ENCODE measurements at regions of chr3 and their contacts with region 1.

Region 1: DNA sequence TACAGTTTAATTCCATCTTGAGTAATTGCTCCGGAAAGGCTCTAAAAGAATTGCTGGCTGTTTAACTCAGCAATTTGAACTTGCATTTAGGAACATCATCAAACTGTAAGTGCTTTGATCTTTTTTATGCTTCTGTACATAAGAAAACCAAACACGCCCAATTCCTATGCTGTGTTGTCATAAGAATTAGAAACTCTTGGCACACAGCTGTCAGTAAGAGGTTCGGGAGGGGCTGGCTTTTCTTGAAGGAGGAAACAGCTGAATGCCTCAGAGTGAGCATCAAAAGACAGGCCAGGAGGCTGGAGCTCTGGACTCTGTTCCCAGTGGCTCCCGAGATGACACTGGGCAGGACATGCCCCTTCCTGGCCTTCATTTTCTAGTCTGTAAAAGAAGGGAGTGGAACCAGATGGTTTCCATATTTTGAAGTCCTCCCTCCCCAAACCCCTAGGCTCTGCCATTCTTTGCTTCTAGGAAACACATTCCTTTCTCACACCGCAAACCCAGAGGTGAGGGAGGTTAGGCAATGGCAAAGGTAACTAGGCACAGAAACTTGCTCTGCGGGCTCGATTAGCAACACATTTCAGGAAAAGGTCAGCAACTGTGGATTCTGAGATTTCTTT is 73.7 kb upstream of the DLG1 start:
- DNase-seq: peak; percentile 66
- ATAC-seq: no peak
- H3K4me3 ChIP-seq: peak overlapping the region in 1 of 3 experiments; percentile 6; a peak in 1 of 6 replicates
- H3K27ac ChIP-seq: peak overlapping the region; percentile 90
- H3K4me1 ChIP-seq: peaks cover 65% of the 10 kb centered on the region
- H3K27me3 ChIP-seq: no peaks in the 10 kb centered on the region
- CTCF ChIP-seq: no peak
- EP300 ChIP-seq: peak in 1 of 2 experiments; percentile 66; a peak in 2 of 4 replicates
- POLR2A ChIP-seq: no peak
- RAD21 ChIP-seq: no peak

Region 2: GRCh38 chr3:196966476-196967401 is 405.4 kb before region 1 on chr3:
- CTCF ChIA-PET with region 1: no interaction called
- POLR2A ChIA-PET with region 1: no interaction called
- in situ Hi-C with region 1: no loop called
- intact Hi-C with region 1: no loop called
- DNase-seq: no peak
- ATAC-seq: no peak
- H3K4me3 ChIP-seq: peak overlapping the region in 1 of 3 experiments; percentile 78; a peak in 2 of 6 replicates
- H3K27ac ChIP-seq: peak overlapping the region; percentile 63
- H3K4me1 ChIP-seq: peaks cover 85% of the 10 kb centered on the region
- H3K27me3 ChIP-seq: no peaks in the 10 kb centered on the region
- CTCF ChIP-seq: no peak
- EP300 ChIP-seq: no peak
- POLR2A ChIP-seq: no peak
- RAD21 ChIP-seq: no peak

Region 3: DNA sequence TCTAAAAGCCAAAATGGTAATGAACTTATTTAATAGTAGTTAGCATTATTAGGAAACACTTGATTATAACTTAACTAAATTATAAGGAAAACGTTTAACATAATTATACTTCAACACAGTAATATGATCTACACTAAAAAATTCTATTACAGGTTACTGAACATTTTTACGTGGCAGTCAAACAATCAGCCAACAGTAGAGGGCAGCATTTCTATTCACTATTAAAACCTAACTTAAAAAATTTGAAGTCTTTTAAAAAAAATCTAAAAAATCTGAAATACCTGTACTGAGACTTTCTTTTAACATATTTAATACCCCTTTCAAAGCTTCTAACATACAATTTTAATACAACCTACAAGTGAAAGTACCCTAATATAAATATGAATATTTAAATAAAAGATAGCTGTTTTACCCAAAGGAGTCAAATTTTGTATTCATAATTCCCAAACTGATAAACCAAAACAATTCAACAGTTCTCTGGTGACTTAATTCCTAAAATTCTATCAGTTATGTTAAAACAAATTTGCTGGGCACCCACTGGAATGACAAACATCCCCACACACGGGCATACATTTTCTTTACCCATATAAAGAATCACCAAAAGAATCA is 115.2 kb before region 1 on chr3:
- CTCF ChIA-PET with region 1: no interaction called
- POLR2A ChIA-PET with region 1: no interaction called
- in situ Hi-C with region 1: no loop called
- intact Hi-C with region 1: loop called (anchors 5 kb)
- DNase-seq: peak; percentile 41
- ATAC-seq: no peak
- H3K4me3 ChIP-seq: no peak overlapping the region
- H3K27ac ChIP-seq: no peak overlapping the region
- H3K4me1 ChIP-seq: peaks cover 35% of the 10 kb centered on the region
- H3K27me3 ChIP-seq: no peaks in the 10 kb centered on the region
- CTCF ChIP-seq: peak; percentile 46
- EP300 ChIP-seq: no peak
- POLR2A ChIP-seq: no peak
- RAD21 ChIP-seq: 0 out of 2 replicates have a peak, but pooled peaks have one; percentile 25

Region 4: GRCh38 chr3:197298341-197298857 is 73.8 kb before region 1 on chr3 and contains the start of gene DLG1:
- CTCF ChIA-PET with region 1: no interaction called
- POLR2A ChIA-PET with region 1: interaction called, 32 read pairs
- in situ Hi-C with region 1: no loop called
- intact Hi-C with region 1: no loop called
- DNase-seq: peak; percentile 88
- ATAC-seq: peak; percentile 78
- H3K4me3 ChIP-seq: peak within 1 kb of the TSS; percentile 91 to 95 (median 94)
- H3K27ac ChIP-seq: peak within 1 kb of the TSS; percentile 98
- H3K4me1 ChIP-seq: peaks cover 54% of the 10 kb centered on the region
- H3K27me3 ChIP-seq: no peaks in the 10 kb centered on the region; a peak in 1 of 5 replicates
- CTCF ChIP-seq: no peak
- EP300 ChIP-seq: no peak
- POLR2A ChIP-seq: peak; percentile 87 to 88
- RAD21 ChIP-seq: peak; percentile 49; the same call in 1 of the 2 replicates
- total RNA-seq, gene DLG1: 104 and 105 TPM in 2 replicates

Region 5: DNA sequence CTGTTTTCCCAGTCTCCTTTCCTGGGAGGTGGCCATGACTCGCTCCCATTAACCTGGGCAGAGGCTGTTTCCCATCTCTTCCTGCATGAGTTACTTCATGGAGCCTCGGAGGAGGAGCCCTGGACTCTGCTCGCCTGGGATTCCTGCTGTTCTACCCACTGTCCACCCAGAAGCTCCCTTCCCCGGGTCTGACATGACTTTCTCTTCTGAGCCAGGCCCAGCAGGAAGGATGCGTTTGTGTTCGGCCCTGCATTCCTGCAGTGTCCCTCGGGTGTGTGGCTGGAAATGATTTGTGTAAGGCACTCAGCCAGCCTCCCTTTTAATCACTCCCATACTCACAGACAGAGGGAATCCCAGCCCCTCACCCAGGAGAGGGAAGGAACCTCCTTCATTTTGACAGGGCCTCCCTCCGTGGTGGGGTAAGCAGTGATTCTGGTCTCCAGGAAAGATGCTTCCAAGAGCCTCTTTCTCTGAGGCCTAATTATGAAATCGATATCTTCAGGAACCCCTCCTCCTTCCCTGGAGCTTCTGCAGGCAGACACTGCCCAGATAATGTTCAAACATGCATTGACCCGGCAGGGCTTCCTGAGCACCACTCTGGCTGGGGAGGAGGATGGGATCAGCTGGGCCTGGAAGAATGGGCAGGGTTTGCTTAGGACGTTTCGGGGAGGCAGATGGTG is 32.2 kb before region 1 on chr3:
- CTCF ChIA-PET with region 1: no interaction called
- POLR2A ChIA-PET with region 1: interaction called, 11 read pairs
- in situ Hi-C with region 1: no loop called
- intact Hi-C with region 1: no loop called
- DNase-seq: peak; percentile 43
- ATAC-seq: peak; percentile 91
- H3K4me3 ChIP-seq: peak overlapping the region; percentile 22 to 52 (median 29); a peak in 5 of 6 replicates
- H3K27ac ChIP-seq: no peak overlapping the region
- H3K4me1 ChIP-seq: peaks cover 34% of the 10 kb centered on the region
- H3K27me3 ChIP-seq: no peaks in the 10 kb centered on the region
- CTCF ChIP-seq: no peak
- EP300 ChIP-seq: no peak
- POLR2A ChIP-seq: peak in 1 of 2 experiments; percentile 46; a peak in 1 of 4 replicates
- RAD21 ChIP-seq: no peak

Region 6: GRCh38 chr3:197420115-197420514 is 48.0 kb after region 1 on chr3:
- CTCF ChIA-PET with region 1: no interaction called
- POLR2A ChIA-PET with region 1: interaction called, 3 read pairs
- in situ Hi-C with region 1: no loop called
- intact Hi-C with region 1: loop called (anchors 5 kb)
- DNase-seq: no peak
- ATAC-seq: no peak
- H3K4me3 ChIP-seq: no peak overlapping the region
- H3K27ac ChIP-seq: no peak overlapping the region
- H3K4me1 ChIP-seq: peaks cover 30% of the 10 kb centered on the region
- H3K27me3 ChIP-seq: no peaks in the 10 kb centered on the region
- CTCF ChIP-seq: no peak
- EP300 ChIP-seq: no peak
- POLR2A ChIP-seq: no peak
- RAD21 ChIP-seq: no peak

Region 7: GRCh38 chr3:197466586-197467399 is 94.6 kb after region 1 on chr3:
- CTCF ChIA-PET with region 1: no interaction called
- POLR2A ChIA-PET with region 1: interaction called, 20 read pairs
- in situ Hi-C with region 1: no loop called
- intact Hi-C with region 1: no loop called
- DNase-seq: no peak
- ATAC-seq: 0 out of 3 replicates have a peak, but pooled peaks have one; percentile 1
- H3K4me3 ChIP-seq: peak overlapping the region; percentile 28 to 56 (median 36); a peak in 5 of 6 replicates
- H3K27ac ChIP-seq: peak overlapping the region; percentile 96
- H3K4me1 ChIP-seq: peaks cover 87% of the 10 kb centered on the region
- H3K27me3 ChIP-seq: no peaks in the 10 kb centered on the region
- CTCF ChIP-seq: no peak
- EP300 ChIP-seq: no peak
- POLR2A ChIP-seq: peak in 1 of 2 experiments; percentile 10; a peak in 1 of 4 replicates
- RAD21 ChIP-seq: no peak

Measured in HepG2 (cell line).